Adrenal gland (tissue), 19 donors: ENCODE measurements at regions of chr7 and their contacts with region 1.

Region 1: DNA sequence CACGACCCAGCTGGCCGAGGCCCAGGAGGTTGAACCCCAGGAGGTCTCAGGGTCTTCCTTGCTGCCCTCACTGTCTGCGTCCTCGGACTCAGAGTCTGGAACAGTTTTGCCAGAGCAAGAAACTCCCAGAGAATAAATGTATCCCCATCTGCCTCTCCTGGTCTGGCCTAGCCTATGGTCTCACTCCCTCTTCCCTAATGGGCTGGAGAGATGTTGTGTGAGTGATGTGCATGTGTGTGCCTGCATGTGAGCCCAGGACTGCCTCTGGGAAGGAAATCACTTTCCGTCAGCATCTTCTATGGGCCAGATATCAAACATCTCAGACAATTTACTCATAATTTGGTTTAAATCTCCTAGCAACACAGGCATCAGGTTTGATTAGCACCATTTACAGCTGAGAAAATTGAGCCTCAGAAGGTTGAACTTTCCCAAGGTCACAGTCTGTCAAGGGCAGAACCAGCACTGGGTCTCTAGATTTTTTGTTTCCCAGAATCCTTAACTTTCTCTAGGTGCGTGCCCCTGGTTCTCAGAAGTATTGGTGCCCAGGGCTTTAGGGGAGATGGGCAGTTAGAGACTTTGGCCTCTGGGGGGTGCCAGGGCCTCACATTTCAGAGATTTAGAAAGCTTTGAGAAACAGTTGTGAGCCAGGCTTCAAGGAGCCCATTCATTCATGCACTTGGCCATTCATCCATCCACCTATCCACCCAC is 4.9 kb downstream of the TMEM270 start:
- DNase-seq: peak in 6 of 7 donors; percentile 35 to 73 (median 46)
- H3K4me3 ChIP-seq: no peak overlapping the region
- H3K27ac ChIP-seq: peak overlapping the region in 1 of 5 donors; percentile 41
- H3K4me1 ChIP-seq: no peaks in the 10 kb centered on the region
- H3K27me3 ChIP-seq: no peaks in the 10 kb centered on the region
- CTCF ChIP-seq: peak; percentile 20 to 64 (median 54)
- POLR2A ChIP-seq: no peak

Region 2: DNA sequence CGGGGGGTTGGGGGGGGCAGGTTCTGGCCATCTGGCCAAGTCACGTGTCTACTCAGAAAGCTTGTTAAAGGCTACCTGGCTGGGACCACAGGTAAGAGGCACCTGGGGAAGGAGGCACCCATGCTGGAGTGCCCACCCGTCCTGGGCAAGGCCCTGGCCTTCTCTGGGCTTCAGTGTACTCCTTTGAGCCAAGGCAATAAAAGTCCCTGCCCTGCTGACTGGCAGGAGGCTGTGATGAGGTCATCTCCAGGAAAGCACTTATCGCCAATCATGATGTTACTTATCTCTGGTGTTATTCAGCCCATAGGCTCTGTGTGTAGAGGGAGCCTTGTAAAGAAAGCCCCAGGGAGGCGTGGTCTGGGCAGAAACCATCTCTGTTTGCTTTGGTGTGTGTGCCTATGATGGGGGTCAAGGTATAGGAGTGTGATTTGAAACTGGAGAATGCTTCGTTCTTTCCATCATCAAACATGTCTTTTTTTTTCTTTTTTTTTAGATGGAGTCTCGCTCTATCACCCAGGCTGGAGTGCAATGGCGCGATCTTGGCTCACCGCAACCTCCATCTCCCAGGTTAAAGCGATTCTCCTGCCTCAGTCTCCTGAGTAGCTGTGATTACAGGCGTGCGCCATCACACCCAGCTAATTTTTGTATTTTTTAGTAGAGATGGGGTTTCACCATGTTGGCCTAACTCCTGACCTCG is 37.6 kb before region 1 on chr7:
- intact Hi-C with region 1: no loop called
- DNase-seq: peak in 6 of 7 donors; percentile 65 to 78 (median 73)
- H3K4me3 ChIP-seq: no peak overlapping the region
- H3K27ac ChIP-seq: peak overlapping the region in 3 of 5 donors; percentile 10 to 75 (median 56)
- H3K4me1 ChIP-seq: peaks cover 11 to 26% of the 10 kb centered on the region in 2 donors
- H3K27me3 ChIP-seq: no peaks in the 10 kb centered on the region
- CTCF ChIP-seq: no peak
- POLR2A ChIP-seq: no peak

Region 3: GRCh38 chr7:73885975-73886798 is 20.3 kb after region 1 on chr7:
- intact Hi-C with region 1: loop called in 1 of 2 experiments (anchors 2 kb)
- DNase-seq: peak in 2 of 7 donors; percentile 16 to 53
- H3K4me3 ChIP-seq: no peak overlapping the region
- H3K27ac ChIP-seq: peak overlapping the region in 1 of 5 donors; percentile 75
- H3K4me1 ChIP-seq: peaks cover 0 to 7% of the 10 kb centered on the region in 2 donors
- H3K27me3 ChIP-seq: no peaks in the 10 kb centered on the region
- CTCF ChIP-seq: no peak
- POLR2A ChIP-seq: no peak

Region 4: GRCh38 chr7:73941836-73942551 is 76.1 kb after region 1 on chr7:
- intact Hi-C with region 1: no loop called
- DNase-seq: no peak
- H3K4me3 ChIP-seq: no peak overlapping the region
- H3K27ac ChIP-seq: no peak overlapping the region
- H3K4me1 ChIP-seq: no peaks in the 10 kb centered on the region
- H3K27me3 ChIP-seq: no peaks in the 10 kb centered on the region
- CTCF ChIP-seq: no peak
- POLR2A ChIP-seq: no peak

Region 5: DNA sequence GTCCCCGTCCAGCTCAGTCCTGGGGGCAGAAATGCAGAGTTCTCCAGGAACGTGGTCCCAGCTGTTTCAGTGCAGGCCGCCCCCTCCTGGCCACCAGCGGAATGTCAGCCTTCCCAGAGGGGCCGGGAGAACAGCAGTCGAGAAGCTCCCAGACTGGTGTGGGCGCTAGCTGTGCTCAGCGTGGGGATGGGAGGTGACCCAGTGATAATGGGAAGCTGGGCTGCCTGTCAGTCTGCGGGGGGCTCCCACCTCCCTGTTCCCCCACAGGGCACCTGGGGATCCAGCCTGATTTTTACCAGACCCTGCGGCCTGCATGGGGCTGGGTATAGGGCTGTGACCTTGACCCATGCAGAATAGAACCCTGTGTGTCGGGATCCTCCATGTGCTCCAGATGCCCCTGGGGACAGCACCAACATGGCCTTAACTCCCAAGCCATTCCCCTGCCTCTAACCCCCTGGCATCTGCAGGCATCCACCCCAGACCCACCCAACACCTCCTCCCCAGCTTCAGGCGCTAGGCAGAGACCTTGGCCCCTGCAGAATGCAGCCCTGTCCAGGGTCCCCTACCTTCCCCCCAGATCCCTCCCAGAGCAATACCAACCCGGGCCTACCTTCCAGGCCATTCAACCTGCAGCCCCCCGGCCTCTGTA is 161.1 kb after region 1 on chr7:
- intact Hi-C with region 1: loop called (anchors 5 kb)
- DNase-seq: peak; percentile 49 to 87 (median 74)
- H3K4me3 ChIP-seq: peak overlapping the region in 1 of 4 donors; percentile 45
- H3K27ac ChIP-seq: peak overlapping the region in 2 of 5 donors; percentile 71 to 74
- H3K4me1 ChIP-seq: peaks cover 0 to 22% of the 10 kb centered on the region in 2 donors
- H3K27me3 ChIP-seq: peaks cover 9% of the 10 kb centered on the region
- CTCF ChIP-seq: peak; percentile 74 to 91 (median 87)
- POLR2A ChIP-seq: peak in 1 of 2 donors; percentile 16

Region 6: DNA sequence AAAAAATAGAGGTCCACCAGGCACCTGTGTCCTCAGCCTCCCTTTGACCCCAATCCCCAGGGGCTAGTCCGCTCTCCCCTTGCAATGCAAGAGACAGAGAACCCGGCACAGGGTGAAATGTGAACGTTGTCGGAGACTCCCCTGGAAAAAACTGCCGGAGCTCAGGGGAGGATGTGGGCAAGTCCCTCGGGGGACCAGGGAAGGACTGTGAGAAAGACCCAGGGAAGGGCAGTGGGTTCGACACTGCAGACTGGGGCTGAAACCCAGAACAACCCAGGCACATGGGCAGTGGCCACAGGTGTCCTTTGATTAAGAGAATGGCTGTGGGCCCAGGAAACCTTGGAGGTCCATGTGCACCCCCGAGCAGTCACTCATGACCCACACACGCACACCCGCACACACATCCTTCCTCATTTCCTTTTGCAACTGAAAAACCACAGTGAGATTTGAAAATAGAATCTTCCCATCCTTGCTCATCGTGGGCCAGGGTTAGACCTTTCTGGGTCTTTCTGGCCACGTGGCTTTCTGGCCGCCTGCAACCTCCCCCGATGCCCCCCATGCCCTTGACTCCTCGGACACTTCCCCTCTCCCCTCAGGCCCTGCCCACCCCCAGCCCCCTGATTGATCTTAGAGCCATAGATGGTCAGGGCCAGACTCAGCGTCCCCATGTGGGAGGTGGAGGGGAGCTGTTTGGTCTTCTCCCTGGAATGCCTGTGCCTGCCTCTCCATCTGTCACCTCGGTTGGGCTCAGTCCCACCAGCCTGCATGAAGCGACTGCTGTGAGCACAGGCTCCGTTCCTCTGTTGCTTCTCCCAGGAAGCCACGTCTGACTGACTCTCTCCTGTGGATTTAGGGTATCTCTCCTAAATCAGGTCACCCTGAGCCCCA is 351.8 kb after region 1 on chr7:
- intact Hi-C with region 1: loop called in 1 of 2 experiments (anchors 10 kb)
- DNase-seq: peak in 1 of 7 donors; percentile 33
- H3K4me3 ChIP-seq: no peak overlapping the region
- H3K27ac ChIP-seq: no peak overlapping the region
- H3K4me1 ChIP-seq: no peaks in the 10 kb centered on the region
- H3K27me3 ChIP-seq: no peaks in the 10 kb centered on the region
- CTCF ChIP-seq: no peak
- POLR2A ChIP-seq: no peak